Activated naive CD4-positive, alpha-beta T cell treated with anti-CD3 and anti-CD28 coated beads for 36 hours (primary cell): ENCODE measurements at regions of chr3 and their contacts with region 1.

Region 1: DNA sequence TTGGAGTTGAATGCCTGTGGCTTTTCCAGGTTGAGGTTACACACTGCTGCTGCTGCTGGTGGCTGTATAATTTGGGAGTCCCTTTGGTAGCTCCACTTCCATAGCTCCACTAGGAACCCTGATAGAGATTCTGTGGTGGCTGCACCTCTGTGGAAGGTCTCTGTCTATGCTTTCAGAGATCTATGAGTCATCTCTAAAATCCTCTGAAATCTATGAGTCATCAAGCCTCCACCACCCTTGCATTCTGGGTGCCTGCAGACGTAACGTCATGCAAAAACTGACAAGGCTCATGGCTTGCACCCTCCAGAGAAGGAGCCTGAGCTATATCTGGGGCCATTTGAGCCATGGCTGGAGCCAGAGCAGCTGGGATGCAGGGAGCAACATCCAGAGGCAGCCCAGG is 1037.0 kb upstream of the CFAP20DC start:
- DNase-seq: peak; percentile 78
- H3K4me3 Mint-ChIP-seq: no peak overlapping the region
- H3K27ac Mint-ChIP-seq: peak overlapping the region; percentile 78
- H3K4me1 Mint-ChIP-seq: peaks cover 66% of the 10 kb centered on the region
- H3K27me3 Mint-ChIP-seq: no peaks in the 10 kb centered on the region

Region 2: GRCh38 chr3:59866076-59866475 is 220.7 kb before region 1 on chr3:
- CTCF ChIA-PET with region 1: no interaction called
- intact Hi-C with region 1: loop called (anchors 1 kb)
- DNase-seq: no peak
- H3K4me3 Mint-ChIP-seq: no peak overlapping the region
- H3K27ac Mint-ChIP-seq: no peak overlapping the region
- H3K4me1 Mint-ChIP-seq: peaks cover 59% of the 10 kb centered on the region
- H3K27me3 Mint-ChIP-seq: no peaks in the 10 kb centered on the region

Region 3: DNA sequence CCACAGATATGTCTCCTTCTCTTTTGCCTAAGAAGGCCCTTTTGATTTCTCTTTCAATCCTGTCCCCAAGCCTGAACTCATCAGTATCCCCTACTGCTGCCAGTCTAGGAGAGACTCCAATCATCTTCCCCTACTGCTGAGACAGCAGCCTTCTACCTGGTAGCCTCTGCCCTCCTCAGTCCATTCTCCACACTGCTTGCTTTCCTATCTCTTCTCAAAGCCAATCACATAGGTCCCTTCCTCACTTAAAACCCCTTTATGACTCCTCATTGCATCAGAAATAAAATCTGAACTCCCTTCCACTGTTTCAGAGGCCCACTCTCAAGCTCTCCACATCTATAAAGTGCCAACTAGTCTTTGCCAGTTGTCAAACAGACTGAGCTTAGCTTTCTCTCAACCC is 44.8 kb after region 1 on chr3:
- CTCF ChIA-PET with region 1: no interaction called
- intact Hi-C with region 1: loop called (anchors 2 kb)
- DNase-seq: peak; percentile 9
- H3K4me3 Mint-ChIP-seq: no peak overlapping the region
- H3K27ac Mint-ChIP-seq: no peak overlapping the region
- H3K4me1 Mint-ChIP-seq: peaks cover 10% of the 10 kb centered on the region
- H3K27me3 Mint-ChIP-seq: no peaks in the 10 kb centered on the region

Region 4: GRCh38 chr3:60192297-60193114 is 105.7 kb after region 1 on chr3:
- CTCF ChIA-PET with region 1: no interaction called
- intact Hi-C with region 1: loop called (anchors 2 kb)
- DNase-seq: peak; percentile 58
- H3K4me3 Mint-ChIP-seq: no peak overlapping the region
- H3K27ac Mint-ChIP-seq: no peak overlapping the region
- H3K4me1 Mint-ChIP-seq: peaks cover 28% of the 10 kb centered on the region
- H3K27me3 Mint-ChIP-seq: no peaks in the 10 kb centered on the region

Region 5: GRCh38 chr3:61381745-61382392 is 1295.1 kb after region 1 on chr3:
- CTCF ChIA-PET with region 1: no interaction called
- intact Hi-C with region 1: loop called (anchors 10 kb)
- DNase-seq: no peak
- H3K4me3 Mint-ChIP-seq: no peak overlapping the region
- H3K27ac Mint-ChIP-seq: no peak overlapping the region
- H3K4me1 Mint-ChIP-seq: peaks cover 2% of the 10 kb centered on the region
- H3K27me3 Mint-ChIP-seq: peaks cover 18% of the 10 kb centered on the region